Cardiac septum (tissue), 1 donor: ENCODE measurements at regions of chr12 and their contacts with region 1.

Region 1: DNA sequence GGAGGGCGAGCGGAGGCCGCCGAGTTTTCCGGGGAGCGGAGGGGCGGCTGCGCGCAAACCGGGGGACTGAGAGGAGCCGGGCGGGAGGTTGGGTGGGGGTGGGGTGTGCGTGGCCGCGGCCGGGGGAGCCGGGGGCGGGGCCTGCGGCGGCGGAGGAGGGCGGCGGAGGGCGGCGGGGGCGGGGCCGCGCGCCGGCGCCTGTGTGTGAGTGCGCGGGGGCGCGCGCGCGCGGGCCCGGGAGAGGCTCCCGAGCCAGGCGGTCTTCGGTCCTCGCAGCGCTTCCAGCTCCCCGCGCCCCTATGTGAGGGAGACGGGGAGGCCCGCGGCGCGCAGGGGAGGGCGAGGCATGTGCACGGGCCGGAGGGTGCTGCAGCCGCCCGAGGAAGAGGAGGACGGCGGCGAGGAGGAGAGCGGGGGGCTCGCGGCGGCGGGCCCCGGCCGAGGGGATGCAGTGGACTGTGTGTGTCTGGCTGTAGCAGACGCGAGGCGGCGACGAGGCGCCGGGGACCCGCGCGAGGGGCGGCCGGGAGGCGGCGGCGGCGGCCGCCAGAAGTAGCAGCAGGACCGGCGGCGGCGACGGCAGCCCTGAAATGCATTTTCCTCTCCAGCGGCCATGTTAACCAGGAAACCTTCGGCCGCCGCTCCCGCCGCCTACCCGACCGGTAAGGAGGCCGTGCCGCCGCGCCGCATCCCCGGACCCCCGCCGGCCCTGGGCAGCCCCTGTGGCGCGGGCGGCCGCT is at the start of gene DYRK2:
- DNase-seq: peak; percentile 87
- total RNA-seq, gene DYRK2: 56.0 TPM

Region 2: GRCh38 chr12:67096533-67097318 is 552.0 kb before region 1 on chr12:
- intact Hi-C with region 1: no loop called
- DNase-seq: no peak

Region 3: GRCh38 chr12:67441736-67442346 is 206.8 kb before region 1 on chr12:
- intact Hi-C with region 1: loop called (anchors 5 kb)
- DNase-seq: peak; percentile 90

Region 4: GRCh38 chr12:67515679-67516340 is 132.9 kb before region 1 on chr12:
- intact Hi-C with region 1: loop called (anchors 10 kb)
- DNase-seq: no peak

Region 5: GRCh38 chr12:67630373-67631088 is 18.2 kb before region 1 on chr12:
- intact Hi-C with region 1: no loop called
- DNase-seq: no peak

Region 6: GRCh38 chr12:67705394-67706370 is 57.0 kb after region 1 on chr12:
- intact Hi-C with region 1: loop called (anchors 2 kb)
- DNase-seq: no peak

Region 7: GRCh38 chr12:67827820-67828383 is 179.2 kb after region 1 on chr12:
- intact Hi-C with region 1: loop called (anchors 5 kb)
- DNase-seq: no peak

Region 8: GRCh38 chr12:67943226-67943892 is 294.7 kb after region 1 on chr12:
- intact Hi-C with region 1: loop called (anchors 2 kb)
- DNase-seq: no peak

Region 9: GRCh38 chr12:68497702-68498101 is 849.0 kb after region 1 on chr12:
- intact Hi-C with region 1: no loop called
- DNase-seq: no peak